ENCODE measurements at regions of chr5 and their contacts with region 1.

Region 1: GRCh38 chr5:15003511-15003920 is 131.9 kb upstream of the ANKH start:
- DNase-seq: peak in 1 of 2 experiments; percentile 49
- H3K4me3 ChIP-seq: no peak overlapping the region
- H3K27ac ChIP-seq: no peak overlapping the region
- H3K4me1 ChIP-seq: no peaks in the 10 kb centered on the region
- H3K27me3 ChIP-seq: no peaks in the 10 kb centered on the region
- CTCF ChIP-seq: peak; percentile 46 to 78 (median 76)
- EP300 ChIP-seq: no peak
- POLR2A ChIP-seq: no peak
- RAD21 ChIP-seq: peak; percentile 88

Region 2: DNA sequence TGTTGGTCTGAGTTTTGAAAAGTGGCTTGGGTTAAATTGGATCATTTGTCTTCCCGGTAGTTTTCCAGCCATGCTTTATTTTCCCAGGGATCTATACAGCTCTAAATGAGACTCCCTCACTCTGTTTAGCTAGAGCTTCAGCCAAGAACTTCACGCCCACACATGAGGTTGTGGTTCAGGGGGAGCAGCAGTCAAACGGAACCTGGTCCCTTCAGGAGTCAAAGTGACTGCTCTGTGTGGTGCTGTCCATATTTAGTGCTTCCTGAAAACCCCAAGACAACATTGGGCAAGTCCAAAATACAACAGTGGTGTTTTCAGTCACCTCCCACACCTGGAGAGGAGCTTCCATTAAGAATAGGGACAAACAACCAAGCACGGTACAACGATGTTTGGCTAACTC is 222.4 kb before region 1 on chr5:
- CTCF ChIA-PET with region 1: interaction called, 16 read pairs
- POLR2A ChIA-PET with region 1: no interaction called
- DNase-seq: no peak
- H3K4me3 ChIP-seq: no peak overlapping the region
- H3K27ac ChIP-seq: no peak overlapping the region
- H3K4me1 ChIP-seq: peaks cover 0 to 11% (median 0%) of the 10 kb centered on the region in 4 experiments; a peak in 2 of 7 replicates
- H3K27me3 ChIP-seq: no peaks in the 10 kb centered on the region
- CTCF ChIP-seq: no peak
- EP300 ChIP-seq: no peak
- POLR2A ChIP-seq: no peak
- RAD21 ChIP-seq: no peak

Region 3: DNA sequence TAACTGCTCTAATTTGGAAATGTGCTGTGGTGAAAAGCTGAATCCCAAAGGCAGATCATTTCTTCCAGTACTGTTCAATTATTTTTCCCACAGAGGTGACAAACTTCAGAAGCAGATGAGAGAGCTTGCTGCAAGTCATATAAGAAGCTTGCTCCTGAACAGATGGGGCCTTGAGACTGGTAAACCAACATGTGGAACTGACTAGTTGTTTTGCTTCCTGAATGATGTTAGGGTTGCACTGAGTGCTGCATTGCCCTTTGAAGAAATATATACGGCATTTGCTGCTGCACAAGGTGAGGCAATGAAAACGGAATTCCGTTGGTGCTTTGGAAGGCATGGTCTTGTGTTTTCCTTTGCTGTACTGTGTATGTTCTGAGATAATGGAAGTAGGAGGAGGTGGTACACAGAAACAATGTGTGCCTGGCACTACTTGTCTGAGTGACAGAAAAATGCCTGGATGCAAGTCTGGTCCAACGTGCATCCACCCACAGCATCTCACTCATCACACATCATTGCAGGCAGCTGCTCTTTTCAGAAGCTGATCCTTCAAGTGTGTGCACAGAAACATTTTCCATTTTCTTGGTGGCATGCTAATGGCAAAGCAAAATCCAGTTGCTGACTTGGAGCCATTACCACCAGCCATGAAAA is 208.8 kb before region 1 on chr5:
- CTCF ChIA-PET with region 1: no interaction called
- POLR2A ChIA-PET with region 1: no interaction called
- DNase-seq: no peak
- H3K4me3 ChIP-seq: no peak overlapping the region
- H3K27ac ChIP-seq: no peak overlapping the region
- H3K4me1 ChIP-seq: peaks cover 0 to 3% (median 0%) of the 10 kb centered on the region in 4 experiments; a peak in 2 of 7 replicates
- H3K27me3 ChIP-seq: no peaks in the 10 kb centered on the region
- CTCF ChIP-seq: no peak
- EP300 ChIP-seq: no peak
- POLR2A ChIP-seq: no peak
- RAD21 ChIP-seq: no peak

Region 4: GRCh38 chr5:14914603-14915277 is 88.8 kb before region 1 on chr5:
- CTCF ChIA-PET with region 1: no interaction called
- POLR2A ChIA-PET with region 1: no interaction called
- DNase-seq: no peak
- H3K4me3 ChIP-seq: no peak overlapping the region
- H3K27ac ChIP-seq: no peak overlapping the region
- H3K4me1 ChIP-seq: no peaks in the 10 kb centered on the region
- H3K27me3 ChIP-seq: no peaks in the 10 kb centered on the region
- CTCF ChIP-seq: no peak
- EP300 ChIP-seq: no peak
- POLR2A ChIP-seq: no peak
- RAD21 ChIP-seq: no peak

Region 5: DNA sequence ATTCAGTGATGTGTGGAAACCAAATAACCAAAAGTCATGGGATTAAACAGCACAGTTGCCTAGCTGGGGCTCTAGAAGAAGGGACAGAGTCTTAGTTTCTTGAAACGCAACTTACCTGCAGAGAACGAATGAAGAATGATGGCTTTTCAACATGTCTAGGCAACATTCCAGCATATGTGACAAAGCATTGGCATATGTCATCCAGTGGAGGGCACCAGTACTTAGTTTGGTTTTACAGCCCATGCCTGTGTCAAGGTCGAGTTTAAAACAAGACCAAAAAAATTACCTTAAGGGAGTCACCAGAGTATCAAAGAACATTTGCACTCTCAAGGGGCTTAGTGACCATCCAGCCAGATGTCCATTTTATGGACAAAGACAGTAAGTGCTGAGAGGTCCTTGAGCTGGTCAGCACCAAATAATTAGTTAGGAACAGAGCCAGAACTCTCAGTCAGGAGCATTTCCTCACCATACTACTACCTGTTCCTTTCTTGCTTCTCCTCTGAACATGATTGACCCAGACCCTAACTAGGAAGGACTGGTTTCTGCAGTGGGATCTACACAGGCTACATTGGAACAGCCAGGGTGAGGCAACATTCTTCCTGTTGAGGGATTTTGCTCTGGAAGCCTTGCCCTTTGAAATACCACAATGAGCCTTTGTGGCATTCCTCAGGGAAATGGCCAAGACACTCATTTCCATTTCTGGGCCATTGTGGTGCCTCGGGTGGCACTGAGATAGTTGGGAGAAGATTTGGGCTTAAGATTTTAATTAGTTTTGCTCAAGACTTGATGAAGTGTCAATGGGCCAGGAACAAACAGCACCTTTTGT is 56.5 kb before region 1 on chr5:
- CTCF ChIA-PET with region 1: interaction called, 10 read pairs
- POLR2A ChIA-PET with region 1: no interaction called
- DNase-seq: no peak
- H3K4me3 ChIP-seq: no peak overlapping the region
- H3K27ac ChIP-seq: no peak overlapping the region
- H3K4me1 ChIP-seq: no peaks in the 10 kb centered on the region
- H3K27me3 ChIP-seq: no peaks in the 10 kb centered on the region
- CTCF ChIP-seq: peak in 2 of 3 experiments; percentile 47 to 59; a peak in 3 of 4 replicates
- EP300 ChIP-seq: no peak
- POLR2A ChIP-seq: no peak
- RAD21 ChIP-seq: peak; percentile 59 to 62

Region 6: DNA sequence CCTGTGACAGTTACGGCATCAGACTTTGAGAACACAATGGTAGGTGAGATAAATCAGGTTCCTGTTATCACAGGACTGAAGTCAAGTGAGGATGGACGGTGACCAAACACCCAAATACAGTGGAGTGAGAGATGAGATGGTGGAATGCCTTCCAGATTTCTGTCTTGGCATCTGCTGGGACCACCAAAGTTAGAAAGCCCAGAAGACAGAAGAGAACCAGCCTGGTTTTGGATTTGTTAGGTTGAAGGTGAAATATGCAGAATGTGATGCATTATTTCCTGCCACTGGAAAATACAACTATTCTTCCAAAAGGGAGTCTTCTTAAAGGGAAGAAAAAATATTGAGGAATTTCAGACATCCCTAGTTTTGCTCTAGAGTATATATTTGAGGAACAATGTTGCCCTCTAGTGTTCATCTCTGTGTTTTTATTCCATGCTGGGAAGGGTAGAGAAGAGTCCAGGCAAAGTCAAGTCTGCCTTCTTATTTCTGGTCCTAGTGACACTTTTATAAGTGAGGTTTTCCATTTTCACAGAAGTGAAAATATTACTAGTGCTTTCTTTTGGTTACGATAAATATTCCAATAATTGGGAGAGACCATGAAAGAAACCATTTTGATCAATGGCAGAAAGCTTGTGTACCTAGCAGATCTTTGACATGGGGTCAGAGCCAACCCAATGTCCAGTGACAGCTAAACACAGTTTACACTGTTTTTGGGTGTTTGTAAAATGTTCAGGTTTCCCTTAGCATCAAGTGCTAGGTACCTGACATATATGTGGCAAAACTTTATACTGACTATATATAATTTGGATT is 10.3 kb after region 1 on chr5:
- CTCF ChIA-PET with region 1: interaction called, 10 read pairs
- POLR2A ChIA-PET with region 1: no interaction called
- DNase-seq: no peak
- H3K4me3 ChIP-seq: no peak overlapping the region
- H3K27ac ChIP-seq: no peak overlapping the region
- H3K4me1 ChIP-seq: peaks cover 0 to 2% (median 0%) of the 10 kb centered on the region in 4 experiments; a peak in 2 of 7 replicates
- H3K27me3 ChIP-seq: no peaks in the 10 kb centered on the region
- CTCF ChIP-seq: peak in 2 of 3 experiments; percentile 35 to 63; a peak in 2 of 4 replicates
- EP300 ChIP-seq: no peak
- POLR2A ChIP-seq: no peak
- RAD21 ChIP-seq: peak; percentile 74 to 78

Region 7: DNA sequence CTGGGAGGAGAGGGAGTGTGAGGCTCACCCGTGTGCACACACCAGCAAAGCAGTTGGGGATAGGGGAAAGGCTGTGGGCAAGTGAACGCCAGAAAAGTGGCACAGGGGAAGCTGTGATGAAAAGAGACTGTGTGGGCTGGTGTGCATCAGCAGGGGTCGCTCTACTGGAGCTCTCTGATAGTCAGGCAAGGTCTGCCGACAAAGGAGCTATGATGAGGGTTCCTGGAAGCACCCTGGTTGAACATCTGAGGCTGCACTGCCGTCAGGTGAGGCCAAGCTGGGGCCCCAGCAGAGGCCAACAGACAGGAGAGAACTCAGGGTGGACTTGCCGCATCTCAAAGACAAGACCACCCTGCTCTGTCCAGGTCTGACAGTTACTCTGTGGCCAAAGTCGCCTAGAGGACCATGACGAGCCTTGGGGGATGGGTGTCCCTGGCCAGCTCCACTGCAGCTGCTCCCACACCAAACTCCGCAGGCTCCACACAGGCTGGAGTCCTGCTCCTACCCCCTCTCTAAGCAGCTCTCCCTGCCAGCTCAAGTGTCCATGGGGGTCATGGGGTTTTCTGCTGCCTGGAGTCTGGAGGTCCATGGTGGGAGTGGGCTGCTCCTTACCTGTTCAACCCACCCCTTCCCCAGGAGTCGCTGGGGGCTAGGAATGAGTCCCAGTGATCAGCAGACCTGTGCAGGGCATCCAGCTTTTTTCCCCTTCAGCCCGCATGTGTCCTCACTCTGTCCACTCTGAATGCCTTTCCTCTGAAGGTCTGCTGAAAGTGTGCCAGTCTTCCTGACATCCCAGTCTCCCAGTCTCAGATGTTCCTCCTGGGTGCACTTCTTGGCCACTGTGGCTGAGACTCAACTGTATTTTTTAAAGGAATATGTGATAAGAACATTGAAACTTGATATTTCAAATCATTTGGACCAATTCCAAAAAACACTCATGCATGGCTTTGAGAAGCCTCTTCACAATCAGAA is 129.2 kb after region 1 on chr5:
- CTCF ChIA-PET with region 1: no interaction called
- POLR2A ChIA-PET with region 1: no interaction called
- DNase-seq: no peak
- H3K4me3 ChIP-seq: no peak overlapping the region
- H3K27ac ChIP-seq: no peak overlapping the region
- H3K4me1 ChIP-seq: peaks cover 0 to 4% (median 1%) of the 10 kb centered on the region in 4 experiments; a peak in 2 of 7 replicates
- H3K27me3 ChIP-seq: no peaks in the 10 kb centered on the region
- CTCF ChIP-seq: peak in 2 of 3 experiments; percentile 7 to 30; a peak in 1 of 4 replicates
- EP300 ChIP-seq: no peak
- POLR2A ChIP-seq: no peak
- RAD21 ChIP-seq: peak in 1 of 2 experiments; percentile 7; a peak in 1 of 4 replicates